Activated B cell treated with CpG ODN at 0.5 μM for 24 hours (primary cell): ENCODE measurements at regions of chr6 and their contacts with region 1.

Region 1: DNA sequence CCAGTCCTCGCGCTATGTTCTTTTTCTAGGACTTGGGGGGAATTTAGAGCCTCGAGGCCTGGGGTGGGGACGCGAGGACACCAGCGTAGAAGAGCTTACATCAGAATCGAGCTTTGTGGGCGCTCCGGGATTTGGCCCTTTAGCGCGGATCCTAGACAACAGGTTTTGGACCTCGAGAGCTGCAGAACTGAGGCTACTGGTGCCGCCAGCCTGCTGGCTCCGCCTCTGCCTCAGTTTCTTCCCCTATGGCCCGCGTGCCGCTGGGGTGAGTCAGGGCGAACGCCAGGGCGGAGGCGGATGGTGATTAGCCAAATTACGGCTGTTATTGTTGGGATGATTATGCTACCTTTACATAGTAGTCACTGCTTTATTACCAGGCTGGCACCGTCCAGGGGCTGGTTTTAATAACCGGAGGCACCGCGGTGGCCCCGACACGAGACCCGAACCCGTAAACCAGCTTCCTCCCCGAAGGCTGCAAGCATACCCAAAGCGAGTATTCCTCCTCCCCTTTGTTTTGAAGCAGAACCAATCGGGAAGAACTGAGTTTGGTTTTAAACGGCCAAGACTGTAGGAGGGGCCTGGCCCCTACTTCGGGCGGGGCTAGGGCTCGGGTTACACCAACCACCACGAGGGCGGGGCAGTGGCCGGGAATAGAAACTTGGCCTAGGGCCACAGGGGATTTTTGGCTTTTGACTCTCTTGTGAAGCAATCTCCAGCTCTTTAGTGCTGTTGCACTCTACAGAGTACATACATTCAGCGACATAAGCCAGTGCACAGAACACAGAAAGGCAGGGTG is 639 bp upstream of the GTPBP2 start:
- DNase-seq: peak; percentile 87
- ATAC-seq: peak; percentile 70
- H3K4me3 Mint-ChIP-seq: peak overlapping the region; percentile 98
- H3K27ac Mint-ChIP-seq: peak overlapping the region; percentile 99
- H3K4me1 Mint-ChIP-seq: peaks cover 41% of the 10 kb centered on the region
- H3K27me3 Mint-ChIP-seq: no peaks in the 10 kb centered on the region
- CTCF ChIP-seq: no peak

Region 2: GRCh38 chr6:42197555-42198362 is 1431.9 kb before region 1 on chr6:
- CTCF ChIA-PET with region 1: no interaction called
- POLR2A ChIA-PET with region 1: no interaction called
- intact Hi-C with region 1: no loop called
- DNase-seq: no peak
- ATAC-seq: no peak
- H3K4me3 Mint-ChIP-seq: no peak overlapping the region
- H3K27ac Mint-ChIP-seq: no peak overlapping the region
- H3K4me1 Mint-ChIP-seq: peaks cover 2% of the 10 kb centered on the region
- H3K27me3 Mint-ChIP-seq: no peaks in the 10 kb centered on the region
- CTCF ChIP-seq: no peak

Region 3: GRCh38 chr6:43247113-43247999 is 382.3 kb before region 1 on chr6:
- CTCF ChIA-PET with region 1: no interaction called
- POLR2A ChIA-PET with region 1: no interaction called
- intact Hi-C with region 1: loop called (anchors 10 kb)
- DNase-seq: peak; percentile 73
- ATAC-seq: peak; percentile 96
- H3K4me3 Mint-ChIP-seq: no peak overlapping the region
- H3K27ac Mint-ChIP-seq: peak overlapping the region; percentile 76
- H3K4me1 Mint-ChIP-seq: peaks cover 29% of the 10 kb centered on the region
- H3K27me3 Mint-ChIP-seq: peaks cover 17% of the 10 kb centered on the region
- CTCF ChIP-seq: no peak

Region 4: GRCh38 chr6:43516697-43517504 is 112.8 kb before region 1 on chr6 and contains the starts of genes POLR1C and YIPF3:
- CTCF ChIA-PET with region 1: no interaction called
- POLR2A ChIA-PET with region 1: interaction called, 8 read pairs
- intact Hi-C with region 1: loop called (anchors 1 kb)
- DNase-seq: peak; percentile 87
- ATAC-seq: peak; percentile 94
- H3K4me3 Mint-ChIP-seq: no peak within 1 kb of the TSS
- H3K27ac Mint-ChIP-seq: peak within 1 kb of the TSS; percentile 54
- H3K4me1 Mint-ChIP-seq: peaks cover 29% of the 10 kb centered on the region
- H3K27me3 Mint-ChIP-seq: no peaks in the 10 kb centered on the region
- CTCF ChIP-seq: no peak
- total RNA-seq, gene POLR1C: 67.7 and 75.6 TPM in 2 replicates
- total RNA-seq, gene YIPF3: 51.7 and 59.1 TPM in 2 replicates

Region 5: GRCh38 chr6:43608310-43608763 is 21.4 kb before region 1 on chr6:
- CTCF ChIA-PET with region 1: interaction called, 4 read pairs
- POLR2A ChIA-PET with region 1: interaction called, 6 read pairs
- intact Hi-C with region 1: loop called (anchors 2 kb)
- DNase-seq: peak; percentile 30
- ATAC-seq: peak; percentile 50
- H3K4me3 Mint-ChIP-seq: no peak overlapping the region
- H3K27ac Mint-ChIP-seq: peak overlapping the region; percentile 47
- H3K4me1 Mint-ChIP-seq: peaks cover 14% of the 10 kb centered on the region
- H3K27me3 Mint-ChIP-seq: no peaks in the 10 kb centered on the region
- CTCF ChIP-seq: peak; percentile 88

Region 6: DNA sequence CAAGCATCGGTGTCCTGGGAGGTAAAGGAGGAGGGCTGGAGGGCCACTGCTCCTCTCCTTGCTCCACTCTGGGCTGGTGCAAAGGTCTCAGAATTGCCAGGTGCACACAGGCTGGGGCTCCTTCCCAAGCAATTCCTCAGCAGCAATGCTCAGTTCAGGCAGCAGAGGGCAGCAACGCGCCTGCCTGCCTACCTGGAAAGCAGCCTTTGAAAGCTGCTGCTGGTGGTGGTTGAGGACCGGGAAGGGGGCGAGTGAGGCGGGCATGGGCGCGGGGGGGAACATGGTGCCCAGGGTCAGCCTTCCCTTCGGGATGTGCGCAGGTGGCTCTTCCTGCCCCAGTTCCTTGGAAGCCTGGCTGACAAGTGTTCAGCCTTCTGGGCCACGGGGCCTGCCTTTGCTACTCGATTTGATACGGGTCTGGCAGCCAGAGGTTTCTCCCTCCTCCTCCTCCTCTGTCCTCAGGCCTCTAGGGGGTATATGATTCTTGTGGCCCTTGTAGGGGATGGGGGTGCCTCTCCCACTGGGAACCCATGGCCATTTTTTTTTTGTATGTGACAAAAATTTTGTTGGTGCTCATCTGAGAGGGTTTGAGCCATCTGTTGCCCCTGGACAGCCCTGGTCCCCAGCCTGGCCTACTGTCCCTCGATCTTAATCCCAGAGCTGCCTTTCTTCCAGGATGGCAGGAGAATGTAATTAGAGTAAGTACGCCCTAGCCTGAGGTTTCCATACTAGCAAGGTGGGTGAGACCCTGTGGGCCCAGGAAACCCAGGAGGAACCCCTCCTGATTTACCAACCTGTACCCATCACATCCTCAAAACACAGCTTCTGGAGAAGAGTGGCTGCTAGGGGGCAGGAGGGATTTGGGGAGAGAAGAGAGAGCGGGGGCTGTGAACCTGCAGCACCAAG is 37.8 kb after region 1 on chr6:
- CTCF ChIA-PET with region 1: interaction called, 3 read pairs
- POLR2A ChIA-PET with region 1: interaction called, 5 read pairs
- intact Hi-C with region 1: loop called (anchors 1 kb)
- DNase-seq: peak; percentile 84
- ATAC-seq: peak; percentile 80
- H3K4me3 Mint-ChIP-seq: peak overlapping the region; percentile 36
- H3K27ac Mint-ChIP-seq: peak overlapping the region; percentile 64
- H3K4me1 Mint-ChIP-seq: peaks cover 18% of the 10 kb centered on the region
- H3K27me3 Mint-ChIP-seq: no peaks in the 10 kb centered on the region
- CTCF ChIP-seq: peak; percentile 42

Region 7: DNA sequence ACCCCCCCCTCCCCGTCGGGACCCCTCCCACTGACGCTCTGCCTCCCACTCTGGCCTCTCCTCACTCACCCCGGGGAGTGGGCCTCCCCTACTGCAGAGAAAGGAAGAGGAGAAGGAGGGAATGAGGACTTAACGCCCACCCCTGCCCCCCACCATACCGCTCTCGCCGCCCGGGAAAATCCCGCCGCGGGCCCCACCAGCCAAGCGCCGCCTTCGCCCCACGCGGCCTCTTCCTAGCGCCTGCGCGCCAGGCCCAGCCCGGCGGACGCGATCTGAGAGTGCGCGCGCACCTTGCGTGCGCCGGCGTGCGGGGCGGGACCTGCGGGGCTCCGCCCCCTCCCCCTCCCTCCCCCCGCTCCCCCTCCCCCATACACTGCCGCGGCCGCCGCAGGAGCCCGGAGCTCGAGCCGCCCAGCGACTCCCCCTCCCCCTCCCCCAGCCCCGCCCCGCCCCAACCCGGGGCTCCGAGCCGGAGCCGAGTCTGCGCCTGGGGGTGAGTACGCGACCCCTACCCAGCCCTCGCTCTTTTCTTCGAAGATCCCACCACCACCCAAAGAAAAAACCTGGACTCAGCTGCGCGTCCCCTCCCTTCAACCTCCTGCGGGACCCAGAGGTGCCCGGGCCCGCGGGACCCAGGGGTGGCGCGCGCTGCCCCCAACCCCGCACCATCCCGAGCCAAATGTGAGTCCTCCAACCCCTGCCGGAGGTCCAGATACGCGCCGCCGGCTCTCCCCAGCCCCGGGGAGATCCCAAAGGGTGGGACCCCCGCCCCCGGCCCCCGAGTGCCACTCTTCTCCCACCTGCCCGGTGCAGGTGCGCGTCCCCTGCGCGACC is 497.7 kb after region 1 on chr6 and contains the starts of genes MRPL14 and TMEM63B:
- CTCF ChIA-PET with region 1: no interaction called
- POLR2A ChIA-PET with region 1: interaction called, 3 read pairs
- intact Hi-C with region 1: loop called (anchors 2 kb)
- DNase-seq: peak; percentile 89
- ATAC-seq: peak; percentile 87
- H3K4me3 Mint-ChIP-seq: peak within 1 kb of the TSS; percentile 93
- H3K27ac Mint-ChIP-seq: peak within 1 kb of the TSS; percentile 95
- H3K4me1 Mint-ChIP-seq: peaks cover 50% of the 10 kb centered on the region
- H3K27me3 Mint-ChIP-seq: no peaks in the 10 kb centered on the region
- CTCF ChIP-seq: no peak
- total RNA-seq, gene MRPL14: 40.5 and 45.5 TPM in 2 replicates
- total RNA-seq, gene TMEM63B: 12.3 and 13.9 TPM in 2 replicates

Region 8: DNA sequence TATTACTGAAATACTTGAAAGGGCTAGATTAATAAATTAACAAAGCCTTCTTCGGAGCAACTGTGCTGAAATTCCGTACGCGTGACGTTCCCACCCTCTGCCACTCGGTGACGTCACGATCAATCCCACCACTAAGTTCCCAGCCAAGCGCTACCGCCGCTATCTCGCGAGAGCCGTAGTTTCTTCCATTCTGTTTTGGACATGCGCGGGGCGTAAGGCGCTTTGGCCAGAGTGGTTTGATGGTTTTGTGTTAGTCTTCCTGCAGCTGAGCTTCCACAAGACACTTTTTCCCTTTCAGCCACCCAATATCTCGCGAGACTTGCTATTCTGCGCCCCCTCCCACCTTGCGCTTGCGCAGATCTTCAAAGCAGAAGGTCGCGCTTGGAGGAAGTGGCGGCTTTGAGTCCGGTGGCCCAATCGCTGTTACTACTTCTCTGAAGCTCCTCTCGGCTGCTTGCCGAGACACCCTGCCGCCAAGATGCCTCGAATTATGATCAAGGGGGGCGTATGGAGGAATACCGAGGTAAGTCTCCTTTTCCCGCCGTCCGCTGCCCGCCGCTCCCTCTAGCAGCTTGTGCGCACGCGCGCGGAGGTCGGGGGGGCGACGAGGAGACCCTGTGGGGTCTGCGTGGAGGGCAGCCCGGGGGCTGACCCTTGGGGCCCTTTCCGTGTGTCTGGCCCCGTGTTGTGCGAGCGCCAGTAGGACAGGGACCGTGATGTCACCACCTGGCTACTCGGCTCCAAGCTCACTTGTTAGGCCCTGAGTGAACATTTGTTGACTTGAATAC is 757.8 kb after region 1 on chr6 and contains the start of gene CDC5L:
- CTCF ChIA-PET with region 1: no interaction called
- POLR2A ChIA-PET with region 1: interaction called, 3 read pairs
- intact Hi-C with region 1: loop called (anchors 1 kb)
- DNase-seq: peak; percentile 82
- ATAC-seq: peak; percentile 91
- H3K4me3 Mint-ChIP-seq: peak within 1 kb of the TSS; percentile 94
- H3K27ac Mint-ChIP-seq: peak within 1 kb of the TSS; percentile 96
- H3K4me1 Mint-ChIP-seq: peaks cover 41% of the 10 kb centered on the region
- H3K27me3 Mint-ChIP-seq: no peaks in the 10 kb centered on the region
- CTCF ChIP-seq: no peak
- total RNA-seq, gene CDC5L: 20.0 and 20.2 TPM in 2 replicates